HCT116 (cell line): ENCODE measurements at regions of chr17 and their contacts with region 1.

Region 1: DNA sequence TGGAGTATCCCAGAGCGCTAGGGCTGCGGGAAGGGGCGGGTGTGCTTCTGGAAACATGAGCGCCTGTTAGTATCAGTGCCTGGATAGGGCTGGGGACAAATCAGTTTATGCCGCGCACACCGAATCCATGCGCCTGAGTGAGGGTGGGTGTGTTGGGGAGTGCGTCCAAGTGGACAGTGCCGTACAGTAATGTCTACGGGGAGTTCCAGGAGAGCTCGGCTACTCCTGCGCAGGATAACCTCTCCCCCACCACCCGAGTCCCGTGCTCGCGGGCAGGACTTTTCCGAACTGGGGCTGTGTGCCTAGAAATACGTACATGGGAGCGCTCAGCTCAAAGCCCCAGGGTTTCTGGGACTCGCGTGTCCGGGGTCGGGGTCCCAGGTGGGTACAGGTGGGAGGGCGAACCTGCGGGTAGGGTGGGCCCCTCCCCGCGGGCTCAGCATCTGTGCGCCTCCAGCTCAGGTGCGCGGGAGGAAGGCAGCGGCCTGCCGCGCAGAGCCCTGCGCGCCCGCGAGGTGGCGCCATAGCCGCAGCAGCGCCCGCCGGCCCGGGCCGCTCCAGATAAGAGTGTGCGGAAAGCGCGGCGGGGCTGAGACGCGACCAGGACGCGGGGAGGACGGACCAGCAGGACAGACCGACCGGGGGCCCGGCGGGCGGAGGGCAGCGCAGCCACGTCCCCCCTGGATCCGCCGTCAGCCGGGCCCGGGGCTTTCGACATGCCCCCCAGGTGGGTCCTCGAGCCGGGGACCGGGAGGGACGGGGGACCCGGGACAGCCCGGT is at the start of gene HIC1:
- DNase-seq: no peak
- ATAC-seq: peak; percentile 62
- H3K4me3 ChIP-seq: no peak within 1 kb of the TSS
- H3K27ac ChIP-seq: no peak within 1 kb of the TSS
- H3K4me1 ChIP-seq: peaks cover 2 to 25% of the 10 kb centered on the region in 2 experiments; a peak in 2 of 4 replicates
- H3K27me3 ChIP-seq: no peaks in the 10 kb centered on the region
- CTCF ChIP-seq: peak; percentile 61 to 84 (median 78)
- POLR2A ChIP-seq: no peak
- RAD21 ChIP-seq: peak; percentile 85
- total RNA-seq, gene HIC1: 0.64 TPM

Region 2: GRCh38 chr17:2232244-2232638 is 177.5 kb after region 1 on chr17:
- CTCF ChIA-PET with region 1: interaction called, 12 read pairs
- POLR2A ChIA-PET with region 1: no interaction called
- RAD21 ChIA-PET with region 1: no interaction called
- intact Hi-C with region 1: no loop called
- DNase-seq: no peak
- ATAC-seq: no peak
- H3K4me3 ChIP-seq: no peak overlapping the region
- H3K27ac ChIP-seq: no peak overlapping the region
- H3K4me1 ChIP-seq: no peaks in the 10 kb centered on the region
- H3K27me3 ChIP-seq: no peaks in the 10 kb centered on the region
- CTCF ChIP-seq: no peak
- POLR2A ChIP-seq: no peak
- RAD21 ChIP-seq: no peak